ENCODE measurements at regions of chr5 and their contacts with region 1.

Region 1: DNA sequence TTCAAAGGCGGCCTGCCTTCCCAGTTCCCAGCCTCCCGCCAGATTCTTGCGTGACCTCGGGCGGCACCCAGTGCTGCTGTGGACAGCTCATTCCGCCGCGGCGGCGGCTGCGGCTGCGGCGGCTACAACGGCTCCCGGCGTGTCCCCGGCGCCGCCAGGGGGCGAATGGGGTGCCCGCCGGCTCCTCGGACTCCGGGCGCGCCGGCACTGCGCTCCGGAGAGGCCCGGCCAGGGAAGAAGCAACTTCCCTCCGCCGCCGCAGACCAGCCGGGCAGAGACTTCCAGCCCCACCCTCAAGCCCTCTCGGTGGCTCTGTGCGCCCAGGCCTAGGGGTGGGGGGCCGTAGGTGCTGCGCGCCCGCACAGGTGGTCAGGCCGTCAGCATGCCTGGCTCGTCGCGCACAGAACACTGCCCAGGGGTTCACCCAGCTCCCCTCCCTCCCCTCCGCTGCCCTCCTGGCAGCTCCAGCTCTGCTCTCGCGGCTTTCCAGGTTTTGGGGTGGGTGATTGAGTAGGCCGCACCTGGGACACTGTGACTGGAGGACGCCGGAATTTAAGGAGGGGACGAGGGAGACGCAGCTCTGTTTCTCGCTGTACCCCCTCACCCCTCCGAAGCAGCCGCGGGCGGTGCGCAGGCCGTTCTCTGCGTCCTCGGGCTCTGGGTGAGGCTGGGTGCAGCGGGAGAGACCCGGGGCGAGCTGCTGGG is 20.2 kb downstream of the IGIP start:
- DNase-seq: peak; percentile 79
- ATAC-seq: peak; percentile 84
- H3K4me3 Mint-ChIP-seq: peak overlapping the region; percentile 26
- H3K27ac Mint-ChIP-seq: no peak overlapping the region
- H3K4me1 Mint-ChIP-seq: peaks cover 14% of the 10 kb centered on the region
- H3K27me3 Mint-ChIP-seq: peaks cover 12% of the 10 kb centered on the region

Region 2: GRCh38 chr5:140073296-140073695 is 72.7 kb before region 1 on chr5:
- CTCF ChIA-PET with region 1: interaction called, 108 read pairs
- POLR2A ChIA-PET with region 1: no interaction called
- intact Hi-C with region 1: loop called (anchors 1 kb)
- DNase-seq: no peak
- ATAC-seq: no peak
- H3K4me3 Mint-ChIP-seq: no peak overlapping the region
- H3K27ac Mint-ChIP-seq: no peak overlapping the region
- H3K4me1 Mint-ChIP-seq: no peaks in the 10 kb centered on the region
- H3K27me3 Mint-ChIP-seq: peaks cover 18% of the 10 kb centered on the region

Region 3: GRCh38 chr5:140107312-140108083 is 38.5 kb before region 1 on chr5:
- CTCF ChIA-PET with region 1: interaction called, 78 read pairs
- POLR2A ChIA-PET with region 1: interaction called, 5 read pairs
- intact Hi-C with region 1: loop called in 1 of 2 experiments (anchors 2 kb)
- DNase-seq: peak; percentile 96
- ATAC-seq: peak; percentile 90
- H3K4me3 Mint-ChIP-seq: peak overlapping the region; percentile 99
- H3K27ac Mint-ChIP-seq: peak overlapping the region; percentile 95
- H3K4me1 Mint-ChIP-seq: peaks cover 43% of the 10 kb centered on the region
- H3K27me3 Mint-ChIP-seq: peaks cover 3% of the 10 kb centered on the region

Region 4: GRCh38 chr5:140113699-140114263 is 32.2 kb before region 1 on chr5 and contains the start of gene PURA:
- CTCF ChIA-PET with region 1: interaction called, 78 read pairs
- POLR2A ChIA-PET with region 1: interaction called, 8 read pairs
- intact Hi-C with region 1: loop called (anchors 2 kb)
- DNase-seq: peak; percentile 98
- ATAC-seq: peak; percentile 92
- H3K4me3 Mint-ChIP-seq: peak within 1 kb of the TSS; percentile 89
- H3K27ac Mint-ChIP-seq: peak within 1 kb of the TSS; percentile 84
- H3K4me1 Mint-ChIP-seq: peaks cover 65% of the 10 kb centered on the region
- H3K27me3 Mint-ChIP-seq: peaks cover 3% of the 10 kb centered on the region
- total RNA-seq, gene PURA: 9.5 to 10.7 TPM

Region 5: GRCh38 chr5:140131967-140132409 is 14.0 kb before region 1 on chr5:
- CTCF ChIA-PET with region 1: interaction called, 78 read pairs
- POLR2A ChIA-PET with region 1: interaction called, 3 read pairs
- intact Hi-C with region 1: no loop called
- DNase-seq: peak; percentile 45
- ATAC-seq: peak; percentile 93
- H3K4me3 Mint-ChIP-seq: no peak overlapping the region
- H3K27ac Mint-ChIP-seq: no peak overlapping the region
- H3K4me1 Mint-ChIP-seq: peaks cover 41% of the 10 kb centered on the region
- H3K27me3 Mint-ChIP-seq: no peaks in the 10 kb centered on the region

Region 6: DNA sequence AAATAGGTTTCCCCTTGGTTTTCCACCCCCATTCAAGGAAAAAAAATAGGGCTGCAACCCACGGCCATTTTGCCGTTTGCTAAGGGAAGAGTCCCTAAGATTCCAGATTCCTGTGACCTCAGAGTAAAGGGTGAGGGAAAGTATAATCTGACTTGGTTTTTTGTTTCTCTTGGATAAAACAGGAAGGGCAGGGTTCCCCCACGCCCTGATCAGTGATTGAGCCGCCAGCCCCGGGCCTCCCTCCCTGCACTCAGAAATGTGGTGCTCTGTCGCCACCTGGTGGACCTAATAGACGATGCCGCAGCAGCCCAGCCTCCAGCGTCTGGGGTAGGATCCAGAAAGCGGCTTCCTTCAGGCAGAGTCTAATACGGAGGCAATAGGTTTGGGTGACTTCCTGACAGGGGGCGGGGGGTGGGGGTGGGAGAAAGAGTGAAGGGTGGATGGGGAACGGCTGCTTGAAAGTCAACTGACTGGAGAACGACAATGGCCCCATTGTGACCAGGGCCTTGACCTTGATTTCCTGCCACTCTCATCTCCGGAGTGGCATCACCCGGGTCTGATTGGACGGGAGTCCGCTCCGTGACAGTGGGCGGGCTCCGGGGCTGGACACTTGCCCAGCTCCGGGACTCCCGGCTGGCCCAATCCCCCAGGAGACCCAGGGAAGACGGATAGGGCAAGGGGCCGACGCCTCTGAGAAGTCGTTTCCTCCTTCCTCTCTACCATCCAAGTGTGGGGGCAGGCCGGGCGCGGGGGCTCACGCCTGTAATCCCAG is 11.2 kb after region 1 on chr5:
- CTCF ChIA-PET with region 1: interaction called, 19 read pairs
- POLR2A ChIA-PET with region 1: interaction called, 3 read pairs
- intact Hi-C with region 1: loop called in 1 of 2 experiments (anchors 1 kb)
- DNase-seq: peak; percentile 94
- ATAC-seq: peak; percentile 99
- H3K4me3 Mint-ChIP-seq: peak overlapping the region; percentile 22
- H3K27ac Mint-ChIP-seq: peak overlapping the region; percentile 49
- H3K4me1 Mint-ChIP-seq: peaks cover 5% of the 10 kb centered on the region
- H3K27me3 Mint-ChIP-seq: no peaks in the 10 kb centered on the region

Region 7: GRCh38 chr5:140169410-140169809 is 23.4 kb after region 1 on chr5:
- CTCF ChIA-PET with region 1: interaction called, 18 read pairs
- POLR2A ChIA-PET with region 1: no interaction called
- intact Hi-C with region 1: no loop called
- DNase-seq: no peak
- ATAC-seq: no peak
- H3K4me3 Mint-ChIP-seq: no peak overlapping the region
- H3K27ac Mint-ChIP-seq: no peak overlapping the region
- H3K4me1 Mint-ChIP-seq: peaks cover 7% of the 10 kb centered on the region
- H3K27me3 Mint-ChIP-seq: no peaks in the 10 kb centered on the region